ENCODE measurements at regions of chr1 and their contacts with region 1.

Region 1: DNA sequence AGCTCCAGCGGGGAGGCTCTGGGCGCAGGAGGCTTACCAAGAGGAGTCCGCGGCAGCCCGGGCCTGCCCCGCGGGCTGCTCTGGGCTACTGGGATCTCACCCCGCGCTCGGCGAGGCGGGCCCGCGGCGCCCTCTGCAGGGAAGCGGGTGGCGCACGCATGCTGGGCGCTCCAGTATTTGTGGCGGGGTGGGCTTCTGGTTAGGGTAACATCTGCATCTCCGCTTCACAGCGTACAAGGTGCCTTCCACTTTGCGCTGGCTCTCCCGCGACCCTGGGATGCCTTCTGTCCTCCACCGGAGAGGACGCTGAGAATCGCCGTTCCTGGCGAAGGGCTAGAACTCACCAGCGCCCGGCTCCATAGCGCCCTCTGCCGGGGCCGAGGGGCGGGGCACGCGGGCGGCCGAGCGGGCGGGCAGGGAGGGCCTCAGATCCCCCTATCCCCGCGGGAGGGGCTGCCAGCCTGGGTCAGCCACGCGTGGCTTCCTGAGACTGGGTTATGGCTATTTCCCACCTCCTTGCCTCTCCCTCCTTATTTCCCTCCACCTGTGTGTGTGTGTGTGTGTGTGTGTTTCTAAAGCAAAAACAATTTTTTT is 46.6 kb upstream of the CTBS start:
- DNase-seq: peak; percentile 57
- H3K4me3 ChIP-seq: peak overlapping the region; percentile 69
- H3K27ac ChIP-seq: peak overlapping the region; percentile 93
- H3K27me3 ChIP-seq: no peaks in the 10 kb centered on the region
- CTCF ChIP-seq: peak; percentile 68

Region 2: GRCh38 chr1:83905315-83905907 is 715.4 kb before region 1 on chr1:
- in situ Hi-C with region 1: loop called (anchors 25 kb)
- DNase-seq: peak; percentile 16
- H3K4me3 ChIP-seq: no peak overlapping the region
- H3K27ac ChIP-seq: no peak overlapping the region
- H3K27me3 ChIP-seq: no peaks in the 10 kb centered on the region
- CTCF ChIP-seq: peak; percentile 63

Region 3: GRCh38 chr1:84156210-84156621 is 464.6 kb before region 1 on chr1:
- in situ Hi-C with region 1: loop called (anchors 25 kb)
- DNase-seq: peak; percentile 64
- H3K4me3 ChIP-seq: no peak overlapping the region
- H3K27ac ChIP-seq: no peak overlapping the region
- H3K27me3 ChIP-seq: no peaks in the 10 kb centered on the region
- CTCF ChIP-seq: no peak

Region 4: GRCh38 chr1:84271441-84272151 is 349.2 kb before region 1 on chr1:
- in situ Hi-C with region 1: no loop called
- DNase-seq: no peak
- H3K4me3 ChIP-seq: no peak overlapping the region
- H3K27ac ChIP-seq: no peak overlapping the region
- H3K27me3 ChIP-seq: no peaks in the 10 kb centered on the region
- CTCF ChIP-seq: no peak

Region 5: GRCh38 chr1:84478876-84479868 is 141.6 kb before region 1 on chr1 and contains the start of gene RPF1:
- in situ Hi-C with region 1: loop called (anchors 25 kb)
- DNase-seq: peak; percentile 71
- H3K4me3 ChIP-seq: peak within 1 kb of the TSS; percentile 84
- H3K27ac ChIP-seq: peak within 1 kb of the TSS; percentile 89
- H3K27me3 ChIP-seq: no peaks in the 10 kb centered on the region
- CTCF ChIP-seq: no peak

Region 6: DNA sequence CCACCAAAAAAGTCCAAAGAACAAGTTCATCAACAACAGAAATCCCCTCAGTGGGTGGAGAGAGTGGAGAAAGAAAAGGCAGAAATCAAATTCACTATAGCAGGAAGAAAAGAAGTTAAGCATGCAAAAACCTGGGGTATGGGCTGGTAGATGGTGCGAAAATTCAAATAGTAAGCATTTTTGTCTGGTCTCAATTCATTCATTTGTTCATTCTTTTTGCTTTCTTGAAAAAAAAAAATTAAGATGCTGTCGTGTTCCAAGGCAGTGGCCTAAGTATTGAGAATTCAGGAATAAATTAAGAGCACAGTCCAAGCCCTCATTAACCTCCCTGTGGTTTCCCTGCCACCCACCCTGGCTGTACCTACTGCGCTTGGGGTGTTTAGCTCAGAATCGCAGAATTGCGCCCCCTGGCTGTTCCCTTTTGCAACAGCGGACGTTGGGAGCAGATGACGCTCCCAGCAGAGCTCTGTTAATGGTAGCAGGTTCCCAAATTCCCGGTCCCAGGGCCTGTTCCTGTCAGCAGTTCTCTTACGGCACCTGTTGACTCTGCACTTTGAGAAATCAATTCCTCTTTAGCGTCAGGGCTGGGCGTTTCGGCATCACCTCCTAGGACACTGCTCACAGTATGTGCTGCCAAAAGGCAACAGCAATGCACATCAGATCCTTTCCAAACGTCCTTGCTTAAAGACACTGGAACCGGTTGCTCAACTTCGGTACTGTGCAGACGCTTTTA is 103.5 kb after region 1 on chr1:
- in situ Hi-C with region 1: no loop called
- DNase-seq: no peak
- H3K4me3 ChIP-seq: no peak overlapping the region
- H3K27ac ChIP-seq: no peak overlapping the region
- H3K27me3 ChIP-seq: no peaks in the 10 kb centered on the region
- CTCF ChIP-seq: peak; percentile 68

Region 7: GRCh38 chr1:84800090-84801073 is 179.6 kb after region 1 on chr1:
- in situ Hi-C with region 1: no loop called
- DNase-seq: no peak
- H3K4me3 ChIP-seq: no peak overlapping the region
- H3K27ac ChIP-seq: no peak overlapping the region
- H3K27me3 ChIP-seq: peaks cover 5% of the 10 kb centered on the region
- CTCF ChIP-seq: no peak

Region 8: DNA sequence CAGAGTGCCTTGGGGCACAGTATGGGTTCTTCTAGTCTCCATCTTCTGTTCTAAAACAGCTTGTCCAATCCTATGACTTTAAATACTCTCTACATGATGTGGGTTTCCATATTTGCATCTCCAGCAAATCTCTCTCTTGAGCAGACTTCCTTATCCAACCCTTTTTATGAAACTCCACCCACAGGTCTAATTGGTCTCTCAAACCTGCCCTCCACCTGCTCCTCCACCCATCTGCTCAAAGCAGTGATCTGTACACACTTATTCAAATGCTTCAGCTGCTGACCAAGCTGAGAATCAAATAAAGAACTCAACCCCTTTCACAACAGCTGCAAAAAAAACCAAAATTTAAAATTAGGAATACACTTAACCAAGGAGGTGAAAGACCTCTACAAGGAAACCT is 364.5 kb after region 1 on chr1:
- in situ Hi-C with region 1: no loop called
- DNase-seq: no peak
- H3K4me3 ChIP-seq: no peak overlapping the region
- H3K27ac ChIP-seq: no peak overlapping the region
- H3K27me3 ChIP-seq: no peaks in the 10 kb centered on the region
- CTCF ChIP-seq: no peak

Measured in brain microvascular endothelial cell (primary cell).